H1 (cell line): ENCODE measurements at regions of chr3 and their contacts with region 1.

Region 1: DNA sequence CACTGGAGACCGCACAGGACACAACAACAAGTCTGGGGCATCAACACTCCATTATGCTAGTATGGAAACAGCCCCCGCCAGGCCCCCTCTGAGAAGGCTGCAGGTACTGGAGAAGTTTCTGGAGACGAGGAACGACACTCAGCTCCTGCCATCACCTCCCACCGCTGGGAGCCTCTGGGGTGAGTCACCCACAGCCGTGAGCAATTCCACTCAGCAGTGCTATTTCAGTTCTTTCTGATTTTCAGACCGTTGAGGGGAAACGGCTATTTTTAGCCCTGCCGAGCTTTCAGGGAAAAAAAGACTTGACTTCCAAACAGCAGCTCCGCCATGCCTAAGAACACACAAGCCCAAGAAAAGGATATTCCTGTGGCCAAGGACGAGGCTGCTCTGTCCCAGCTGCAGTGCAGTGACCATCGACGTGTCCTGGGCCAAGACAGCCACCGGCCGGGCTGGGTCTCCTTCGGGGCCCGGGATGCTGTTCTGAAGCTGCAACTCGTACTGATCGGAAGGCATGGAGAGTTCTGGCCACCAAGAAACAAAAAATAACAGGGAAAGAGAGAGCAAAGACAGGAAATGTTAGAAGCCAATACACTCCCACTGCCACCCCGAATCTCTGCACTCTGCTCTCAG is 40.8 kb downstream of the NUP210 start:
- DNase-seq: no peak
- H3K4me3 ChIP-seq: no peak overlapping the region
- H3K27ac ChIP-seq: no peak overlapping the region
- H3K4me1 ChIP-seq: no peaks in the 10 kb centered on the region
- H3K27me3 ChIP-seq: no peaks in the 10 kb centered on the region
- CTCF ChIP-seq: no peak
- EP300 ChIP-seq: no peak
- POLR2A ChIP-seq: no peak
- RAD21 ChIP-seq: no peak

Region 2: DNA sequence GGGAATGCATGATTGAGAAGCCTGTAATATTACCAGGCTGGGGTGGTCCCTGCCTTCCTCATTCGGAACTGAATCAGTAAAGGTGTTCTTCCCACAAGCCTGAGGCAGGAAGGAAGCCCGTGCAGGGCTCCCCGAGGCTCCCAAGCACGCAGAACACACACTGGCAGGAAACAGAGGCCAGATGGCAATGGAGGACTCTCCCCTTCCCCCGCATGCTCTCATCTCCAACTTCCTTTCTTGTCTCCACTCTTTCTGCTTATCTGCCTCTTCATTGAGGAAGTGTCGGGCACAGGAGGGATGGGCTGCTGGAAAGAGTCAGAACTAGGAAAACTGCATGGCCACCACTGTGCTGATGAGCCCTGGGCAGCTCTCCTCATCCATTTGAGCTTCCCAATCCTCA is 82.7 kb before region 1 on chr3:
- CTCF ChIA-PET with region 1: no interaction called
- POLR2A ChIA-PET with region 1: no interaction called
- DNase-seq: no peak
- H3K4me3 ChIP-seq: no peak overlapping the region
- H3K27ac ChIP-seq: no peak overlapping the region; the same call in 1 of the 2 replicates
- H3K4me1 ChIP-seq: peaks cover 0 to 13% (median 6%) of the 10 kb centered on the region in 4 experiments; a peak in 6 of 7 replicates
- H3K27me3 ChIP-seq: no peaks in the 10 kb centered on the region; a peak in 1 of 7 replicates
- CTCF ChIP-seq: no peak
- EP300 ChIP-seq: no peak
- POLR2A ChIP-seq: no peak
- RAD21 ChIP-seq: no peak

Region 3: DNA sequence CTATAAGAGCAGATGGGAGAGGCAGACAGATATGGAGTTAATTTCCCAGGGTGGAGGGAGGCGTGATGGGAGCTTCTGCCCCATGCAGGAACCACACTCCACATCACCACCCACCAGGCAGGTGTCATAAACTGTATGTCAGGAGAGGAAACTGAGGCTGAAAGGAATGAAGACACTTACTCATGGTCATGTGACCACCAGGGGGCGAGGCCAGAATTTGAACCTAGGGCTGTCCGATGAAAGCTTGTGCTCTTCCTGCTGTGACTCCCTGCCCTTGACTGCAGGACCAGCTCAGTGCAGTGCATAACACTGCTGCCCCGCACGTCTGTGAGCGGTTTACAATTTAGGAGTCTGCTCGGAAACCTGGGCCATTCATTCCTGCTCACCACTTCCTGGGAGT is 12.0 kb after region 1 on chr3:
- CTCF ChIA-PET with region 1: interaction called, 40 read pairs
- POLR2A ChIA-PET with region 1: no interaction called
- DNase-seq: no peak
- H3K4me3 ChIP-seq: no peak overlapping the region
- H3K27ac ChIP-seq: no peak overlapping the region
- H3K4me1 ChIP-seq: 0 out of 7 replicates have a peak, but pooled peaks cover 0 to 8% (median 0%) of the 10 kb centered on the region in 4 experiments
- H3K27me3 ChIP-seq: no peaks in the 10 kb centered on the region
- CTCF ChIP-seq: peak in 2 of 3 experiments; percentile 6 to 41; a peak in 3 of 4 replicates
- EP300 ChIP-seq: no peak
- POLR2A ChIP-seq: no peak
- RAD21 ChIP-seq: peak in 1 of 2 experiments; percentile 17; a peak in 1 of 4 replicates